ENCODE measurements at regions of chr12 and their contacts with region 1.

Region 1: DNA sequence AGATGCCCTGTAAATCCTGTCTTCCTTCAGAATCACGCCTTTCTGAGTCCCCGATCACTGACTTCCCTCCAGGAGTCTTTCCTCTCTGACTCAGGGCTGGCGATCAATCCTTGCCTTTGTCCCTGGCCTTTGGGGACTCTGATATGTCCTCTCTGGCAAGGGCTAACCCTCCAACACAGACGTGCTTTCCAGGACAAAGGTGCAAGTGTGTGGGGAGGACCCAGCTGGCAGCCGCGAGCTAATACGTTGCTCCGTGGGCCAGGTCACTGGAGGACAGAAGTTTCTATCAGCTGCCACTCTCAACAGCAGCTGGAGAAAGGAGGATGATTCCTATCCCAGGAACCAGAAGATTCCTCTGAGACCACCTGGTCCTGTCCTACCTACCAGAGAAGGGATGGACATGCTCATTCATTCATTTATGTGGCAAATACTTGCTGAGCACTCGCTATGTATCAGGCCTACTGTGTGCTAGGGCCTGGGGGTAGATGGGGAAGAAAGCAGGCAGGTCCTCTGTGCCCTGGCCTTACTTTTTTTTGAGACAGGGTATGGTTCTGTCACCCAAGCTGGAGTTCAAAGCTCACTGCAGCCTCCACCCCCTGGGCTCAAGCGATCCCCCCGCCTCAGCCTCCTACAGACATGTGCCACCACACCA is 8.5 kb upstream of the SCARB1 start:
- DNase-seq: no peak
- H3K4me3 ChIP-seq: no peak overlapping the region
- H3K27ac ChIP-seq: no peak overlapping the region
- H3K4me1 ChIP-seq: no peaks in the 10 kb centered on the region
- H3K27me3 ChIP-seq: no peaks in the 10 kb centered on the region
- CTCF ChIP-seq: no peak

Region 2: GRCh38 chr12:124044809-124045321 is 827.3 kb before region 1 on chr12:
- intact Hi-C with region 1: loop called (anchors 10 kb)
- DNase-seq: no peak
- H3K4me3 ChIP-seq: no peak overlapping the region
- H3K27ac ChIP-seq: no peak overlapping the region
- H3K4me1 ChIP-seq: no peaks in the 10 kb centered on the region
- H3K27me3 ChIP-seq: no peaks in the 10 kb centered on the region
- CTCF ChIP-seq: no peak